Kidney (tissue), 22 donors: ENCODE measurements at regions of chr10 and their contacts with region 1.

Region 1: GRCh38 chr10:116787893-116788665 is 45.7 kb upstream of the HSPA12A start:
- DNase-seq: peak; percentile 89 to 94 (median 91)
- H3K4me3 ChIP-seq: peak overlapping the region in 2 of 3 donors; percentile 40 to 53
- H3K27ac ChIP-seq: peak overlapping the region in 1 of 2 donors; percentile 36
- H3K4me1 ChIP-seq: peaks cover 0 to 5% (median 4%) of the 10 kb centered on the region in 3 donors
- H3K27me3 ChIP-seq: no peaks in the 10 kb centered on the region
- CTCF ChIP-seq: peak; percentile 96

Region 2: DNA sequence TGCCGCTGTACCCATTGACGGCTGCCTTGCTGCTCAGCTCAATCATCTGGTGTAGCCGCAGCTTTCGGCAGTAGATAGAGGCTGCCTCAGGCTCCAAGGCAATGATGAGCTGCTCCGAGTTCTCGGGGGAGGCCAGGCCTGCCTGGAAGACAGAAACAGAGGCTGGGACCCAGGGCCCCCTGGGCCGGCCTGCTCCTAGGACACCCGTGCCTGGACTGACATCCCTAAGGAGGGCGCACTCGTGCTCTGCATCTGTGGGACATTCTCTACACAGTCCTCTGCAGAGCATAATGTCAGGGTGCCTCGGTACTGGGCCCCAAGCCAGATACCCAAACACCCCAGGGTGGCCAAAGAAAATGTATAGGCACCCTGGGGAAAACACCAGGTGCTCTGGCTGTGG is 104.3 kb before region 1 on chr10:
- intact Hi-C with region 1: loop called (anchors 5 kb)
- DNase-seq: no peak
- H3K4me3 ChIP-seq: no peak overlapping the region
- H3K27ac ChIP-seq: peak overlapping the region in 1 of 2 donors; percentile 6
- H3K4me1 ChIP-seq: peaks cover 0 to 24% (median 0%) of the 10 kb centered on the region in 3 donors
- H3K27me3 ChIP-seq: no peaks in the 10 kb centered on the region
- CTCF ChIP-seq: no peak

Region 3: GRCh38 chr10:116708391-116708821 is 79.7 kb before region 1 on chr10:
- intact Hi-C with region 1: no loop called
- DNase-seq: peak in 2 of 5 donors; percentile 53 to 61
- H3K4me3 ChIP-seq: no peak overlapping the region
- H3K27ac ChIP-seq: no peak overlapping the region
- H3K4me1 ChIP-seq: peaks cover 0 to 19% (median 19%) of the 10 kb centered on the region in 3 donors
- H3K27me3 ChIP-seq: no peaks in the 10 kb centered on the region
- CTCF ChIP-seq: no peak